Endothelial cell of umbilical vein (primary cell): ENCODE measurements at regions of chr1 and their contacts with region 1.

Region 1: DNA sequence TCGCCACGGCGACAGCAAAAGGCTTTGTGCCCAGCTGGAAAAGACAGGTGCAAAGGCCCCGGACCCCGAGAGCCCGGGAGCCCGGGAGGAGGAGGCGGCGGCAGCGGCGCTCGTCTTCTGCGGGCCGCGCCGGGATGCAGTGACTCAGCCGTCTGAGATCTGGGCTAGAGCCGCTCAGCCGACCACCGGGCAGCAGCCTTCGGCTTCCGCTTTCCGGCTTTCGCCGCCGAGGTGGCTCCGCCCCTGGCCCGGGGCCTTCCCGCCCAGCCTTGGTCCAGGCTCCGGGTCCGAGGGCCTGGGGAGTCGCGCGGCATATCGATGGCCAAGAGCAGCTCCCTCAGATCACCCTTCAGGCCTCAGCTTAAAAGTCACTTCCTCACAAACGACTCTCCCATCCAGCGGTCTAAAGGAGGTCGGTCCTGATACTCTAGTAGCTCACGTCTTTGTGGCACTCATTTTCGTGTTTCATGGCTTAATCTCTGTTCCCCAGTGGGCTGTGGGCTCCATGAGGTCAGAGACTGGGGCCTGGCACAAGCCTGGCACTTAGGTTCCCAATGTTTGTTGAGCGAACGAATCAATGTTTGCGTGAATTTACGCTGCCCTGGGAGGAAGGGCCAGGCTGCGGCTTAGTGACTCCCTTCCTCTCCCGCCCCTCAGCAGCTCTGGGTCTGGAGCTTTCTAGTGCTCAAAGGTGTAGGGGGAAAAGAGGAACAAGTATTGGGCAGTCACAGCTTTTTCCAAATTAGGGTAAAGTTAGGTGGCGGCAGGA is at the start of gene PHTF1:
- DNase-seq: peak; percentile 82
- H3K4me3 ChIP-seq: peak within 1 kb of the TSS; percentile 83 to 100 (median 96)
- H3K27ac ChIP-seq: peak within 1 kb of the TSS; percentile 92
- H3K4me1 ChIP-seq: peaks cover 22% of the 10 kb centered on the region
- H3K27me3 ChIP-seq: no peaks in the 10 kb centered on the region
- CTCF ChIP-seq: no peak
- POLR2A ChIP-seq: peak; percentile 98
- total RNA-seq, gene PHTF1: 62.6 and 68.7 TPM in 2 replicates

Region 2: GRCh38 chr1:112706908-112707663 is 1052.4 kb before region 1 on chr1 and contains the start of gene RHOC:
- CTCF ChIA-PET with region 1: no interaction called
- POLR2A ChIA-PET with region 1: no interaction called
- dilution Hi-C with region 1: no loop called
- intact Hi-C with region 1: loop called (anchors 5 kb)
- DNase-seq: peak; percentile 88
- H3K4me3 ChIP-seq: peak within 1 kb of the TSS; percentile 81 to 90 (median 89)
- H3K27ac ChIP-seq: peak within 1 kb of the TSS; percentile 88
- H3K4me1 ChIP-seq: peaks cover 40% of the 10 kb centered on the region
- H3K27me3 ChIP-seq: no peaks in the 10 kb centered on the region
- CTCF ChIP-seq: peak; percentile 97 to 98
- POLR2A ChIP-seq: peak; percentile 83
- total RNA-seq, gene RHOC: 652 and 699 TPM in 2 replicates

Region 3: GRCh38 chr1:113140588-113141446 is 618.7 kb before region 1 on chr1:
- CTCF ChIA-PET with region 1: interaction called, 3 read pairs
- POLR2A ChIA-PET with region 1: no interaction called
- dilution Hi-C with region 1: no loop called
- intact Hi-C with region 1: loop called (anchors 2 kb)
- DNase-seq: peak; percentile 64
- H3K4me3 ChIP-seq: no peak overlapping the region
- H3K27ac ChIP-seq: no peak overlapping the region
- H3K4me1 ChIP-seq: peaks cover 26% of the 10 kb centered on the region
- H3K27me3 ChIP-seq: no peaks in the 10 kb centered on the region
- CTCF ChIP-seq: peak; percentile 77 to 87
- POLR2A ChIP-seq: no peak

Region 4: GRCh38 chr1:113811888-113812660 is 52.6 kb after region 1 on chr1 and contains the start of gene RSBN1:
- CTCF ChIA-PET with region 1: no interaction called
- POLR2A ChIA-PET with region 1: interaction called, 6 read pairs
- dilution Hi-C with region 1: no loop called
- intact Hi-C with region 1: loop called (anchors 1 kb)
- DNase-seq: peak; percentile 100
- H3K4me3 ChIP-seq: peak within 1 kb of the TSS; percentile 65 to 97 (median 74)
- H3K27ac ChIP-seq: peak within 1 kb of the TSS; percentile 81
- H3K4me1 ChIP-seq: peaks cover 26% of the 10 kb centered on the region
- H3K27me3 ChIP-seq: no peaks in the 10 kb centered on the region
- CTCF ChIP-seq: peak in 1 of 2 donors; percentile 8
- POLR2A ChIP-seq: peak; percentile 89
- total RNA-seq, gene RSBN1: 10.8 and 13.4 TPM in 2 replicates

Region 5: GRCh38 chr1:113928941-113929749 is 169.6 kb after region 1 on chr1 and contains the start of gene HIPK1:
- CTCF ChIA-PET with region 1: no interaction called
- POLR2A ChIA-PET with region 1: no interaction called
- dilution Hi-C with region 1: no loop called
- intact Hi-C with region 1: loop called (anchors 2 kb)
- DNase-seq: peak; percentile 90
- H3K4me3 ChIP-seq: peak within 1 kb of the TSS; percentile 63 to 73 (median 65)
- H3K27ac ChIP-seq: peak within 1 kb of the TSS; percentile 89
- H3K4me1 ChIP-seq: peaks cover 26% of the 10 kb centered on the region
- H3K27me3 ChIP-seq: peaks cover 0 to under 1% of the 10 kb centered on the region in 2 experiments
- CTCF ChIP-seq: no peak
- POLR2A ChIP-seq: peak; percentile 91
- total RNA-seq, gene HIPK1: 50.2 and 56.1 TPM in 2 replicates